ENCODE measurements at regions of chr11 and their contacts with region 1.

Region 1: GRCh38 chr11:122853971-122854446 is 15.7 kb downstream of the CRTAM start:
- DNase-seq: peak; percentile 84
- ATAC-seq: peak; percentile 69
- H3K4me3 ChIP-seq: no peak overlapping the region
- H3K27ac ChIP-seq: no peak overlapping the region
- H3K4me1 ChIP-seq: peaks cover 8 to 42% of the 10 kb centered on the region in 2 experiments; a peak in 3 of 4 replicates
- H3K27me3 ChIP-seq: no peaks in the 10 kb centered on the region
- CTCF ChIP-seq: peak; percentile 48 to 96 (median 85)
- POLR2A ChIP-seq: no peak
- RAD21 ChIP-seq: peak; percentile 96

Region 2: GRCh38 chr11:122354025-122354697 is 499.8 kb before region 1 on chr11:
- CTCF ChIA-PET with region 1: no interaction called
- POLR2A ChIA-PET with region 1: no interaction called
- RAD21 ChIA-PET with region 1: no interaction called
- intact Hi-C with region 1: no loop called
- DNase-seq: no peak
- ATAC-seq: no peak
- H3K4me3 ChIP-seq: no peak overlapping the region
- H3K27ac ChIP-seq: no peak overlapping the region
- H3K4me1 ChIP-seq: no peaks in the 10 kb centered on the region
- H3K27me3 ChIP-seq: no peaks in the 10 kb centered on the region
- CTCF ChIP-seq: no peak
- POLR2A ChIP-seq: no peak
- RAD21 ChIP-seq: no peak

Region 3: GRCh38 chr11:122628810-122629555 is 225.0 kb before region 1 on chr11:
- CTCF ChIA-PET with region 1: interaction called, 31 read pairs
- POLR2A ChIA-PET with region 1: no interaction called
- RAD21 ChIA-PET with region 1: interaction called in 1 of 2 experiments, 4 read pairs
- intact Hi-C with region 1: loop called (anchors 1 kb)
- DNase-seq: peak; percentile 64
- ATAC-seq: peak; percentile 99
- H3K4me3 ChIP-seq: no peak overlapping the region
- H3K27ac ChIP-seq: no peak overlapping the region
- H3K4me1 ChIP-seq: peaks cover 3 to 19% of the 10 kb centered on the region in 2 experiments; a peak in 3 of 4 replicates
- H3K27me3 ChIP-seq: no peaks in the 10 kb centered on the region
- CTCF ChIP-seq: peak; percentile 90 to 95 (median 92)
- POLR2A ChIP-seq: no peak
- RAD21 ChIP-seq: peak; percentile 90

Region 4: DNA sequence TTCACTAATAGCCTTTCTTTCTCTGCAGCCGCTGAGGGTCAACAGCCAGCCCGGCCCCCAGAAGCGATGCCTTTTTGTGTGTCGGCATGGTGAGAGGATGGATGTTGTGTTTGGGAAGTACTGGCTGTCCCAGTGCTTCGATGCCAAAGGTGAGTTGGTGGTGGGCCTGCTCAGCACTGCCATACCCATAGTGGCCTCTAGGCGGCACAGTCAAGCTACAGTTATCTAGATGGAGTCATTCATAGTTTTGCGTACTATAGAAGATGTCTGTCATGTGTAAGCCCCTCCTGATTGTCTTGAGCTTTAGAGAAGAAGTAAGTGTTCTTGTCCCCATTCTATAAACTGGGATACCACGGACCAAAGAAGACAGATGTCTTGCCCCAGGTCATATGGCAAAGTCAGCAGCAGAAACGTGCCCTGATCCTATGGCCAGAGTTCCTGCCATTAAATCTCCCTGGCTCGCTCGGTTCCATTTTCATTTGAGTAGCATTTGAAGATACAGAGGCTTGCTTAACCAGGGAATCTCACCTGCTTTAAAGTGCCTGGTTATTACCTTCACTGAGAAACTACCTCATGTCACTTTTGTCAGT is 57.8 kb before region 1 on chr11:
- CTCF ChIA-PET with region 1: interaction called, 15 read pairs
- POLR2A ChIA-PET with region 1: no interaction called
- RAD21 ChIA-PET with region 1: no interaction called
- intact Hi-C with region 1: loop called (anchors 1 kb)
- DNase-seq: no peak
- ATAC-seq: peak; percentile 92
- H3K4me3 ChIP-seq: no peak overlapping the region
- H3K27ac ChIP-seq: no peak overlapping the region
- H3K4me1 ChIP-seq: peaks cover 0 to 6% of the 10 kb centered on the region in 2 experiments; a peak in 1 of 4 replicates
- H3K27me3 ChIP-seq: no peaks in the 10 kb centered on the region
- CTCF ChIP-seq: peak; percentile 61 to 92 (median 92)
- POLR2A ChIP-seq: no peak
- RAD21 ChIP-seq: peak; percentile 77

Region 5: GRCh38 chr11:122910775-122911174 is 56.8 kb after region 1 on chr11:
- CTCF ChIA-PET with region 1: no interaction called
- POLR2A ChIA-PET with region 1: no interaction called
- RAD21 ChIA-PET with region 1: no interaction called
- intact Hi-C with region 1: no loop called
- DNase-seq: peak; percentile 8
- ATAC-seq: peak; percentile 49; the same call in 1 of the 2 replicates
- H3K4me3 ChIP-seq: no peak overlapping the region
- H3K27ac ChIP-seq: no peak overlapping the region
- H3K4me1 ChIP-seq: no peaks in the 10 kb centered on the region
- H3K27me3 ChIP-seq: no peaks in the 10 kb centered on the region
- CTCF ChIP-seq: peak; percentile 31 to 58 (median 55); a peak in 4 of 6 replicates
- POLR2A ChIP-seq: no peak
- RAD21 ChIP-seq: peak; percentile 75

Region 6: DNA sequence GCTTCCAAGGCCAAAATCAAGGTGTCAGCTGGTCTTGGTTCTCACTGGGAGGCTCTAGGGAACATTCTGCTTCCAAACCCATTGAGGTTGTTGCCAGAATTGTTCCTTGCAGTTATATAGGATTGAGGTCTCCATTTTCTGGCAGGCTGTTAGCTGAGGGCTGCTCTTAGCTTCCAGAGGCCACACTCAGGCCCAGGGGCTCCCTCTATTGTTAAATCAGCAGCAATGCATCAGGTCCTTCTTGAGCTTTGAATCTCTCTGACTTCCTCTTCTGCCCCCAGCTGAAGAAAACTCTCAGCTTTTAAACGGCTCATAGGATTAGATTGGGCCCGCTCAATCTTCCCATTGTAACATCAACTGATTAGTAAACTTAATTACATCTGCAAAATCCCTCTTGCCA is 167.0 kb after region 1 on chr11:
- CTCF ChIA-PET with region 1: interaction called, 14 read pairs
- POLR2A ChIA-PET with region 1: no interaction called
- RAD21 ChIA-PET with region 1: interaction called in 1 of 2 experiments, 5 read pairs
- intact Hi-C with region 1: no loop called
- DNase-seq: peak; percentile 33
- ATAC-seq: peak; percentile 84
- H3K4me3 ChIP-seq: no peak overlapping the region
- H3K27ac ChIP-seq: no peak overlapping the region
- H3K4me1 ChIP-seq: peaks cover 0 to 11% of the 10 kb centered on the region in 2 experiments; a peak in 2 of 4 replicates
- H3K27me3 ChIP-seq: no peaks in the 10 kb centered on the region
- CTCF ChIP-seq: peak; percentile 65 to 73 (median 73)
- POLR2A ChIP-seq: no peak
- RAD21 ChIP-seq: peak; percentile 73

Measured in HCT116 (cell line).